H1 (cell line): ENCODE measurements at regions of chr12 and their contacts with region 1.

Region 1: DNA sequence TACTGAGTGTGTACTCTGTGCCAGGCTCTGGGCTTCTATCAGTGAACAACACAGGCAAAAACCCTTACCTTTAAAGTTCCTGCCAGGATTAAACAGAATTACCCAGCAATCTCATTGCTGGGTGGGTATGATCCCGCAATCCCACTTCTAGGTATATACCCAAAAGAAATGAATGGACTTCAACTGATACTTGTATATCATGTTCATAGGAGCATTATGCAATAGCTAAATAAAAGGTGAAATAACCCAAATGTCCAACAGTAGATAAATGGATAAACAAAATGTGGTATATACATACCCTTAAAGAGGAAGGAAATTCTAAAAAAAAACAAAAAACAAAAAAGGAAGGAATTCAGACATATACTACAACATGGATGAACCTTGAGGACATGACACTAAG is 14.7 kb downstream of the DAZAP2 start:
- DNase-seq: no peak
- H3K4me3 ChIP-seq: no peak overlapping the region
- H3K27ac ChIP-seq: no peak overlapping the region
- H3K4me1 ChIP-seq: peaks cover 0 to 5% (median 0%) of the 10 kb centered on the region in 4 experiments; a peak in 1 of 7 replicates
- H3K27me3 ChIP-seq: no peaks in the 10 kb centered on the region
- CTCF ChIP-seq: no peak
- EP300 ChIP-seq: no peak
- POLR2A ChIP-seq: no peak
- RAD21 ChIP-seq: no peak

Region 2: DNA sequence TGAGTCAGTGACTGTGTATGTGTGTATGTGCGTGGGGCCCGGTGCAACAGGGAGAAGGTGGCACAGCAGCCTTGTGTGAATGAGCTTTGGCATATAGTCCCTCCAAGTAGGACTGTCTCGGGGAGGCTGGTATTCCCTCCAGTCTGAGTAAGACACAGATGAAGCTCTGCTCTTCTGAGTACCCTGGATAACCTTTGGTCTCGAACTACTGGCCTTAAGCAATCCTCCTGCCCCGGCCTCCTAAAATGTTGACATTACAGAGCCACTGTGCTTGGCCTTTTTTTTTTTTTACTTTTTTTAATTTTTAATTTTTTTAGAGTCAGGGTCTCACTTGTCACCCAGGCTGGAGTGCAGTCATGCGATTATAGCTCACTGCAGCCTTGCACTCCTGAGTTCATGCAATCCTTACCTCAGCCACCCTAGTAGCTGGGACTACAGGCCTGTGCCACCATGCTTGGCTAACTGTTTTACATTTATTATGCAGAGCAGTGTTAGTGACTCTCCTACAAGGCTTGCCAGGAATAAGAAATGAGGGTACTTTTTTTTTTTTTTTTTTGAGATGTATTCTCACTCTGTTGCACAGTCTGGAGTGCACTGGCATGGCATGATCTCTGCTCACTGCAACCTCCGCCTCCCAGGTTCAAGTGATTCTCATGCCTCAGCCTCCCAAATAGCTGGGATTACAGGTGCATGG is 24.0 kb before region 1 on chr12:
- CTCF ChIA-PET with region 1: interaction called, 10 read pairs
- POLR2A ChIA-PET with region 1: no interaction called
- DNase-seq: no peak
- H3K4me3 ChIP-seq: no peak overlapping the region
- H3K27ac ChIP-seq: no peak overlapping the region
- H3K4me1 ChIP-seq: no peaks in the 10 kb centered on the region
- H3K27me3 ChIP-seq: no peaks in the 10 kb centered on the region
- CTCF ChIP-seq: no peak
- EP300 ChIP-seq: no peak
- POLR2A ChIP-seq: no peak
- RAD21 ChIP-seq: no peak

Region 3: DNA sequence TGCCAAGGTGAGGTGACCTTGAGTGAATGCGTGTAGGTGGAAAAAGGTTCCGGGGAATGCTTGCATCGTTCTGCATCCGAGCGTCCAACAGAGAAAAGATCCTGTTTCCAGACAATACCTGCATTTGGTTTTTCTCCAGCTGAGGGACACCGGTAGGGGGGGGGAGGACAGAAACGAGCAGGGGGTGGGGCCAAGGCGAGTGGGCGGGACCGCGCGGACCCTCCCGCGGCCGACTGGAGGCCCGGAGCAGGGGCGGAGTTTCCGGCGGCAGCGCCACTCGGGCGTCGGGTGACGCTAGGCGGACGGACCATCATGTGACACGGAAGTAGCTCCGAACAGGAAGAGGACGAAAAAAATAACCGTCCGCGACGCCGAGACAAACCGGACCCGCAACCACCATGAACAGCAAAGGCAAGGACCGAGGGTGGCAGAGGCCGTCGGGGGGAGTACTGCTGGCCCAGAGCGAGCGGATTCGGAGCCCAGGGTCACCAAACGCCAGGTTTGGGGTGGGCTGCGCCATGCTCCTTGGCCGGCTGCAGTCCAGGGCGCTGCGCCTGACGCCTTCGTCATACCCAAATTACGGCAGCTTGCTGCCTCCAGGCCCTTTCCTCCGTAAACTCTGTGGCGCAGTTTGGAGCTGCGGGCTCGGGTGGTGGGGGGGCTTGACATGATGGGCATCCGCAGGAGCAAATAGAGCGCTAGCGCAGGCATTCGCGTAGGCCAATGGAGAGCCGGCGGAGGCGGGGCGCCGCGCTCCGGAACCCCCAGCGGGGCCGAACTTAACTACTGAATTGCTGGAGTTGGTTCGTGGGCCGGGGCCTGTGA is 14.6 kb before region 1 on chr12 and contains the start of gene DAZAP2:
- CTCF ChIA-PET with region 1: interaction called, 12 read pairs
- POLR2A ChIA-PET with region 1: interaction called, 26 read pairs
- DNase-seq: peak; percentile 89 to 92
- H3K4me3 ChIP-seq: peak within 1 kb of the TSS; percentile 90 to 100 (median 99)
- H3K27ac ChIP-seq: peak within 1 kb of the TSS; percentile 99
- H3K4me1 ChIP-seq: peaks cover 0 to 9% (median 5%) of the 10 kb centered on the region in 4 experiments; a peak in 6 of 7 replicates
- H3K27me3 ChIP-seq: no peaks in the 10 kb centered on the region
- CTCF ChIP-seq: peak in 1 of 3 experiments; percentile 7; a peak in 1 of 4 replicates
- EP300 ChIP-seq: peak in 1 of 2 experiments; percentile 32; a peak in 1 of 3 replicates
- POLR2A ChIP-seq: peak; percentile 69 to 92
- RAD21 ChIP-seq: no peak
- total RNA-seq, gene DAZAP2: 24.9 and 27.1 TPM in 2 replicates

Region 4: DNA sequence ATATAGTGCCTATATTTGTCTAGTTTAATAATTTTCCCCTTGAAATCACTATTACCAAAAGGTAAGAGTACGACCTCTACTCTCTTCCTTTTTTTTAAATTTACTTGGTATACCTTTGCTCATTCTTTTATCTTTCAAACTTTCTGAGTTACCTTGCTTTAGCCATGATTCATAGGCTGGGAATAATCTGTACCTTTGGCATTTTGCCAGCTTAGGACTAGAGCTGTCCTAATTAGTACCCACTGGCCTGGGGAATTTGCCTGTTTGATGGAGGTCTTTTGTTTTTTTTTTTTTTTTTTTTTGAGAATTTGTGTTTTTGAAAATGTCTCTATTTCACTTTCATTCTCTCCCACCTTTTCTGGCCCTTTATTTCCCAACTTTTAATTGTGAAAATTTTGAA is 162.7 kb after region 1 on chr12:
- CTCF ChIA-PET with region 1: no interaction called
- POLR2A ChIA-PET with region 1: no interaction called
- DNase-seq: no peak
- H3K4me3 ChIP-seq: no peak overlapping the region
- H3K27ac ChIP-seq: no peak overlapping the region
- H3K4me1 ChIP-seq: peaks cover 0 to 8% (median 5%) of the 10 kb centered on the region in 4 experiments; a peak in 4 of 7 replicates
- H3K27me3 ChIP-seq: no peaks in the 10 kb centered on the region
- CTCF ChIP-seq: no peak
- EP300 ChIP-seq: no peak
- POLR2A ChIP-seq: no peak
- RAD21 ChIP-seq: no peak